ENCODE measurements at regions of chr9 and their contacts with region 1.

Region 1: GRCh38 chr9:21789541-21790037 is 12.8 kb upstream of the MTAP start:
- DNase-seq: peak; percentile 85
- H3K4me3 ChIP-seq: no peak overlapping the region
- H3K27ac ChIP-seq: no peak overlapping the region
- H3K4me1 ChIP-seq: no peaks in the 10 kb centered on the region
- H3K27me3 ChIP-seq: no peaks in the 10 kb centered on the region
- CTCF ChIP-seq: peak; percentile 57 to 92 (median 88)
- POLR2A ChIP-seq: no peak

Region 2: DNA sequence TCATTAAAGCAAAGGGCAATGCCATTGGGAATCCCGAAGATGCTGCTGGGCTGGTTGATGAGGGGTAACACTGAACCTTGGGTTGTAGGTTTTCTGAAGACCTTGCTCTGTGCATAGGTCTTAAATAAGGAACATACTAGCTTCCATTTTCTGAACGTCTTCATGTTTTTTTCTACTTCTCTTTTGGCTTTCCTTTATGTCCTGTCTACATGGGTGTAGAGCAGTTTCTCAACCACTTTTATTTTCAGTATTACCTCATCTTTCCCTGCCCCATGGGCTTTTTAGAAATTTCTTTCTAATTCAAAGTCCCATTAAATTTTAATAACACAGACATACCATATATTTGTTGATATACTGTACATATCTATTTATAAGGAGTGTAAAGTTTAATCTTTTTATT is 549.7 kb before region 1 on chr9 and contains the start of gene IFNA14:
- intact Hi-C with region 1: loop called (anchors 10 kb)
- DNase-seq: no peak
- H3K4me3 ChIP-seq: no peak within 1 kb of the TSS
- H3K27ac ChIP-seq: no peak within 1 kb of the TSS
- H3K4me1 ChIP-seq: no peaks in the 10 kb centered on the region
- H3K27me3 ChIP-seq: peaks cover 2% of the 10 kb centered on the region
- CTCF ChIP-seq: no peak
- POLR2A ChIP-seq: no peak
- total RNA-seq, gene IFNA14: not detected

Region 3: DNA sequence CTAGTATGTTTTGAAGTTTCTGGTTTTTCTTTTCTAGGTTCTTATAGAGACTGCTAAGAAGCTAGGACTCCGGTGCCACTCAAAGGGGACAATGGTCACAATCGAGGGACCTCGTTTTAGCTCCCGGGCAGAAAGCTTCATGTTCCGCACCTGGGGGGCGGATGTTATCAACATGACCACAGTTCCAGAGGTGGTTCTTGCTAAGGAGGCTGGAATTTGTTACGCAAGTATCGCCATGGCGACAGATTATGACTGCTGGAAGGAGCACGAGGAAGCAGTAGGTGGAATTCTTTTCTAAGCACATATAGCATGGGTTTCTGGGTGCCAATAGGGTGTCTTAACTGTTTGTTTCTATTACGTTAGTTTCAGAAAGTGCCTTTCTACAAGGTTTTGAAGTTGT is 65.0 kb after region 1 on chr9:
- intact Hi-C with region 1: no loop called
- DNase-seq: no peak
- H3K4me3 ChIP-seq: no peak overlapping the region
- H3K27ac ChIP-seq: no peak overlapping the region
- H3K4me1 ChIP-seq: no peaks in the 10 kb centered on the region
- H3K27me3 ChIP-seq: no peaks in the 10 kb centered on the region
- CTCF ChIP-seq: no peak
- POLR2A ChIP-seq: no peak

Measured in prostate gland (tissue), 2 donors.